ENCODE measurements at regions of chrX and their contacts with region 1.

Region 1: DNA sequence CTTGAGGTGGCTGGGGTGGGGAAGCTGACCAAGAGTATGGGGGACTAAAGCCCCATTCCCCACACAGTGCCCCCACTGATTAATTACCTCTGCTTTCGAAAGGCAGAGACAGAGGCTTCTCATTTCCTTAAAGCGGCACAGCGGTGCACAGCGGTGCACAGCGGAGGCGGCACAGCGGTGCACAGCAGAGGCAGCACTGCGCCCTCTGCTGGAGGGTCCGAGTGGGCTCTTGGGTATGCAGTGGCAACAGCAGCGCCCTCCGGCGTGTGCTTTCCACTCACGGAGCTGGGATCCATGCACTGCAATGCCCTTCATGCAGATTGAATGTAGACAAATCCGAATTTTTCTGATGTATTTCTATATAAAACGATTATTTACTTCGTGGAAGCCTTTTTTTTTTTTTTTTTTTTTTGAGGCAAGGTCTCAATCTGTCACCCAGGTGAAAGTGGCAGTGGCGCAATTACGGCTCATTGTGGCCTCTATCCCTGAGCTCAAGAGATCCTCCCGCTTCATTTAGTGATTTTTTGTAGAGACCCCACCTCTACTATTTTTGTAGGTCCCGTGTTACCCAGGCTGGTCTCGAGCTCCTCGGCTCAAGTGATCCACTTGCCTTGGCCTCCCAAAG is 19.7 kb upstream of the PRPS2 start:
- DNase-seq: peak; percentile 85
- ATAC-seq: peak; percentile 100
- H3K4me3 Mint-ChIP-seq: no peak overlapping the region
- H3K27ac Mint-ChIP-seq: no peak overlapping the region
- H3K4me1 Mint-ChIP-seq: peaks cover 8% of the 10 kb centered on the region
- H3K27me3 Mint-ChIP-seq: peaks cover 5% of the 10 kb centered on the region

Region 2: DNA sequence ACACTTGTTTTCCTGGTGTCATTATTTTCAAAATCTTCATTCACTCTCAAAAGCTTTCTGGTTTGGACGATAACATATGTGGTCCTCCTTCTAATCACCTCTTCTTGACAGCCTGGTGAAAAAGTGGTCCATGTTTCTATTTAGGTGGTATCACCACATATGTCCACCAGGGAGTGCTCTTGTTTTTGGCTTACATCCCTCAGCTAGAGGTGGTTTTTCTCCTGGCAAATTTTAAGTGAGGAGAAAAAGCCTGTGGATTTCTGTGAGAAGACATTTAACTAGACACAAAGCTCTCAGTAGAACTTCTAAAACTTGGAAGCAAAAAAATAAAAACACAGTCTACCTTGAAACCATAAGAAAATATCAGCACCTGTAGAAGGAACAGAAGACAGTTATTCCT is 691.3 kb before region 1 on chrX:
- CTCF ChIA-PET with region 1: no interaction called
- POLR2A ChIA-PET with region 1: no interaction called
- intact Hi-C with region 1: loop called in 1 of 2 experiments (anchors 2 kb)
- DNase-seq: no peak
- ATAC-seq: no peak
- H3K4me3 Mint-ChIP-seq: no peak overlapping the region
- H3K27ac Mint-ChIP-seq: no peak overlapping the region
- H3K4me1 Mint-ChIP-seq: no peaks in the 10 kb centered on the region
- H3K27me3 Mint-ChIP-seq: peaks cover 6% of the 10 kb centered on the region

Region 3: DNA sequence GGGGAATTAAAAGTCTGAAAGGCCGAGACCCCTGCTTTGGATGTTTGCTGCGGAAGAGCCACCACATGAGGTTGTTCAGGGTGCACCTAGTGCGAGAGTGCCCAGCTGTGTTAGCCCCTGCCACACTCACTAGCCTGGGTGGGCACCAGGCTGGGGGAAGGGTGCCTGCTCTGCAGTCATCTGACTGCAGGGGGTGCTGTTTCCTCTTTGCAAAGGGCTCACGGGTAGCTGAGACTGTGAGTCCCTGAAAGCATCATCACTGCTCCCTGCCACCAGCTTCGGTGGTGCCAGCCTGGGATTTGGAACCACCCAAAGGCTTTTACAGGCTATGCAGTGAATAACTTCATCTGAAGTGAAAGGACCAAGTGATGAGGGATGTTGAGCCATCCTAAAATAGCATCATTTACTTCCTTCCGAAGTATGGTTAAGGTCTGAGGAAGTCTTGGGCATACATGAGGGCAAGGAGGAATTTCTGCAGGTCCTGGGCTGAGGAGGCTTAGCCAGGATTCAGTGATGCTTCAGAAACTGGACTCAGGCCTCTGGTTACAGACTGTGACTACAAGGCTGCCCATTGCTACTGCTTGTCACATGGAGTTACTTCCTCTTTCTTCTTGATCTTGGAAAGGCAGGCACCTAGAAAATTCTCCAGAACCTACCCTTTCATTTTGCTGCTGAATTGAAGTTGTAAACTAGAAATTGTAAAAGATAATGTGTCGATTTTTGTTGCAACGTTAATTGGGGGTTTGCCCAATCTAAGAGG is 273.5 kb before region 1 on chrX:
- CTCF ChIA-PET with region 1: no interaction called
- POLR2A ChIA-PET with region 1: no interaction called
- intact Hi-C with region 1: loop called in 1 of 2 experiments (anchors 5 kb)
- DNase-seq: peak; percentile 9
- ATAC-seq: no peak
- H3K4me3 Mint-ChIP-seq: no peak overlapping the region
- H3K27ac Mint-ChIP-seq: no peak overlapping the region
- H3K4me1 Mint-ChIP-seq: no peaks in the 10 kb centered on the region
- H3K27me3 Mint-ChIP-seq: no peaks in the 10 kb centered on the region

Region 4: GRCh38 chrX:12791257-12792228 is 20.0 kb after region 1 on chrX and contains the start of gene PRPS2:
- CTCF ChIA-PET with region 1: interaction called, 23 read pairs
- POLR2A ChIA-PET with region 1: no interaction called
- intact Hi-C with region 1: no loop called
- DNase-seq: peak; percentile 83
- ATAC-seq: peak; percentile 93
- H3K4me3 Mint-ChIP-seq: peak within 1 kb of the TSS; percentile 79
- H3K27ac Mint-ChIP-seq: peak within 1 kb of the TSS; percentile 80
- H3K4me1 Mint-ChIP-seq: peaks cover 37% of the 10 kb centered on the region
- H3K27me3 Mint-ChIP-seq: no peaks in the 10 kb centered on the region
- total RNA-seq, gene PRPS2: 110 to 116 TPM

Region 5: DNA sequence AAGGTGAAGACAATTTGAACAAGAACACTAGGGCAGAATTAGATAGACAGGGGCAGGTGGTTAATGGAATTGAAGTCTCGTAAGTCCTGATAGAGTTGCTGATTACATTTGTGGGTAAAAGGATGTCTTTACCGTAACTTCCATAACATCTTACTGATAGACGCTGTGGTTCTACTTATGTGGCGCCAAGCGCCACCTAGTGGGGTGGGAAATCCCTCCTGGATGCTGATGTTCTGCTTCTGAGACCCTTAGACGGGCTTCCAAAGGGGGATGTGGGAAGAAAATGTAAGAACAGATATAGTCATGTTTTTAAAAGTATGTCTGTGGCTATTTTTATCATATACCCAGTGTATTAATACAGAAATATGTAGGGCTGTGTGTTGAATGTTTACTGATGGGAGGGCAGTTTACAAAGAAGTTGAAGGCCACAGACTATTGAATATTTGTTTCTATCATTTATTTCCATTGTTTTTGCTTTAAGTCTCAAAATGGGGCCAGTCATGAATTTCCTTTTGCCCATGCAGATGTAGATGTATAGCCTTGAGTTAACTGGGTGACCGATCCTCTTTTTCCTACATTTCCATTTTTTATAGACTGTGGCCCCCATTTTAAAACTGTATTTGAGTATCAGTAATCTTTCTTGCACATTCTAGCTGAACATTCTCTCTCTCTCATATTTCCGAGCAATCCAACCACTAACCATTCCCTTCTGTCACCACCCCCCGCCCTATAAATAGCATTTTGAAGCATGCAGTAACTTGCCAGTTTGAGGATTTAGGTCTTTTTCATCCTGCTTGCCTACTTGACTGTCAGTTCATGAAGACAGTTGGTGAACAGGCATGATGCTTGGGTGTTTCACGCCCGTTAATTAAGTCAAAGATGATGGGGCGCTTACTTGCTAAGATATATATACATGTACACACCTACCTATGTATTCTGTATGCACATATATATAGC is 122.8 kb after region 1 on chrX:
- CTCF ChIA-PET with region 1: interaction called, 7 read pairs
- POLR2A ChIA-PET with region 1: no interaction called
- intact Hi-C with region 1: loop called in 1 of 2 experiments (anchors 2 kb)
- DNase-seq: peak; percentile 67
- ATAC-seq: peak; percentile 28
- H3K4me3 Mint-ChIP-seq: no peak overlapping the region
- H3K27ac Mint-ChIP-seq: no peak overlapping the region
- H3K4me1 Mint-ChIP-seq: peaks cover 34% of the 10 kb centered on the region
- H3K27me3 Mint-ChIP-seq: no peaks in the 10 kb centered on the region

Region 6: DNA sequence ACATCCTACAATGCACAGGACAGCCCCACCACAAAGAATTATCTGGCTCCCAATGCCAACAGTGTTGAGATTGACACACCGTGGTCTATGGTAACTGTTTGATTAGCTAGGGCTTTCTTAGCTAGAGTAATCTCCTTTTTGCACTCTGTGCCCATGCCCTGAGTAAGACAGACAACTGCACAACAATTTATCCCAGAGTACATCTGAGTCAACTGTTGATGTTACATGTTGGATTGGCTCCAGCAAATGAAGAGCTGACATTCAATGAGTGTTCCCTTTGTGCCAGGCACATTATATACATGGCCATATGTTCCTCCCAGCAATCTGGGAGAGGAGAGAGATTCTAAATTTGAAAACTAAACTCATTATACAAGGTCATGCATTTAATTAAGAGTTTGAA is 276.7 kb after region 1 on chrX:
- CTCF ChIA-PET with region 1: no interaction called
- POLR2A ChIA-PET with region 1: no interaction called
- intact Hi-C with region 1: no loop called
- DNase-seq: no peak
- ATAC-seq: no peak
- H3K4me3 Mint-ChIP-seq: no peak overlapping the region
- H3K27ac Mint-ChIP-seq: no peak overlapping the region
- H3K4me1 Mint-ChIP-seq: peaks cover 68% of the 10 kb centered on the region
- H3K27me3 Mint-ChIP-seq: no peaks in the 10 kb centered on the region

Measured in activated CD4-positive, alpha-beta T cell treated with anti-CD3 and anti-CD28 coated beads for 36 hours (primary cell).